Motor neuron (in vitro differentiated cells): ENCODE measurements at regions of chr9 and their contacts with region 1.

Region 1: DNA sequence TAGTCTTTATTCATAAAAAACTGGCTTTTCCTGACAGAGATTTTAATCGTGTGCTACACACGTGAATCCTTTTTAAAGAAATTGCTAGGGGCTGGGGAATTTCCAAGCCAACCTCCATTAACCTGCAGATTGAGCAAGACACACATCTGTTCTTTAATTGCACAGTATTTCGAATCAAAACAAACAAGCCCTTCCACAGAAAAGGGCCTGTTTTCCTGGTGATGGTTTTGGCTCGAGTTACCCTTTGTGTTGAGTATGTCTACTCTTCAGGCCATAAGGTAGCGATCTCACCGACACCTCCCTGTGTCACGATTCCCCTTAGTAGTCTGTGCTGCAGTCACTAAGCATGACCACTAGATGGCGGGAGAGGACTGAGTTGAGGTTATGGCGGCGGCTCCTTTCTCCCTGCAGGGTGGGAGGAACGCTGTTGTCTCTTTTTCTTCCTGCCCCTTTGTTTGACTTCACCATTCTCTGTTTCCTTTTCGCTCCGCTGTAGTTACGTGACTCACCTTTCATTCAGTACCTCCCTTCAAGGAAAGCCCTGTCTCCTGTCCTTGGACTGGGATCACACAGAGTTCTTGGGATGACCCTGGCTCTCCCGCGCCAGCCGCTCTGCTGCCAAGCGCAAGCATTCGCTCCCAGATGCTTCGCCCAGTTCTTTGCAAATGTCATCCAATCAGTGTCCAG is 137.1 kb upstream of the SLC24A2 start:
- ATAC-seq: peak; percentile 86 to 92 (median 90)
- H3K4me3 ChIP-seq: peak overlapping the region; percentile 9 to 35 (median 17)
- H3K27ac ChIP-seq: no peak overlapping the region
- H3K4me1 ChIP-seq: peaks cover 8 to 11% of the 10 kb centered on the region in 2 donors

Region 2: GRCh38 chr9:19481971-19482404 is 444.0 kb before region 1 on chr9:
- in situ Hi-C with region 1: loop called in 6 of 9 experiments (anchors 10 to 25 kb)
- ATAC-seq: no peak
- H3K4me3 ChIP-seq: no peak overlapping the region
- H3K27ac ChIP-seq: no peak overlapping the region
- H3K4me1 ChIP-seq: no peaks in the 10 kb centered on the region

Region 3: DNA sequence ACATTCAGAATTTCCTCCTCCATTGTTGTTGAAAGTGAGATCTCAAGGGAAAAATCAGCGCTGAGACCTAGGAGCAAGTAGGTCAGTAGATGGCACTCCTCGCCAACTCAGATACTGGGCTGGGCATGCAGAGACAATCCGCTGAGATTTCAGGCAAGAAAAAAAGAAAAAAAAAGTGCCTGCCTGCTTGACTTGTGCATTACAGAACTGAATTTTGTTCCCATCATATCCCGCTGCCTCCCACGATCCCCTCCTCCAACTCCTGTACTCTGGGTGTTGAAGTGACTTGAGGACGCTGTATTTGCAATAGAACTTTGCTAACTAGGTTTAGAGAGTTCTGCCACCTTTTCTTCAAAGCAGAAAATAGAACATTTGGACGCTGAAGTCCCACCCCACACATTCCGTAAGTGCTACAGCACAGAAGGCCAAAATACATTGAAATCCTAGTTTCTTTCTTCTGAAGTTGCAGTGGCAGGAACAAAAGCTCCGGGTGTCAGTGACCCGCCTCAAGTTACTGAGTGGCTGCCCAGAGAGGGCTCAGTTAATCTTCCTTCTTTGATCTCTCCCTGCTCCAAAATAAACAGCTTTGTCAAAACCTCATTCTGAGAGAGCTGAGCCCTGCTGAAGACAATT is 430.6 kb after region 1 on chr9:
- in situ Hi-C with region 1: loop called in 3 of 9 experiments (anchors 5 to 25 kb)
- ATAC-seq: peak; percentile 77 to 97 (median 96)
- H3K4me3 ChIP-seq: peak overlapping the region in 2 of 5 donors; percentile 6 to 8
- H3K27ac ChIP-seq: no peak overlapping the region
- H3K4me1 ChIP-seq: peaks cover 8 to 22% of the 10 kb centered on the region in 2 donors

Region 4: DNA sequence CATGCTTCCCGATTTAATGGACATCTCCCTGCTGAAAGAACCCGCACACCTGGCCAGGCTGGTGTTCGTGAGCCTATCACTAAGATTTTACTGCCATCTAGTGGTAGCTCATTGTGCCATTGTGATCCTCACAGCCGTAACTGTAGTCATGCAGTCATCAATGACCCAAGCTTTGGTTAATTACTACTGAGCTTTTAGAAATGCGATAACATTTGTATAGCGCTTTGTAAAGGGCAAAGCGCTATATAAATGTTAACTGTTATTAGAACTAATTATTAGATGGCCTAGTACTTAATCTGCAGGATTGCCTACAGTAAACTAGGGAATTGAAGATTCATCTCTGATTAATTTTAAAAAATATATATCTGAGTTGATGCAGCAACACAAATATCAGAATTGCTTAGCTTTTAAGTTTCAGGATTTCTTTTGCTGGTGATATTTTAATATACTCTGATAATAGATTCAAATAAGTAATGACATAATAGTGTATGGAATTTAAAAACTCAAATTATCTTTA is 1015.3 kb after region 1 on chr9:
- in situ Hi-C with region 1: loop called in 1 of 9 experiments (anchors 25 kb)
- ATAC-seq: peak; percentile 81 to 99 (median 97)
- H3K4me3 ChIP-seq: no peak overlapping the region
- H3K27ac ChIP-seq: no peak overlapping the region
- H3K4me1 ChIP-seq: no peaks in the 10 kb centered on the region